ENCODE measurements at regions of chr12 and their contacts with region 1.

Region 1: GRCh38 chr12:92784795-92785562 is 82.2 kb downstream of the PLEKHG7 start:
- DNase-seq: peak in 22 of 35 experiments; percentile 1 to 78 (median 14)
- ATAC-seq: peak; percentile 96 to 99 (median 98)
- H3K4me3 ChIP-seq: no peak overlapping the region
- H3K4me3 Mint-ChIP-seq: no peak overlapping the region
- H3K27ac ChIP-seq: no peak overlapping the region
- H3K27ac Mint-ChIP-seq: no peak overlapping the region
- H3K4me1 ChIP-seq: peaks cover 0 to 3% of the 10 kb centered on the region in 2 experiments
- H3K4me1 Mint-ChIP-seq: peaks cover 12 to 16% (median 14%) of the 10 kb centered on the region in 3 donors
- H3K27me3 ChIP-seq: no peaks in the 10 kb centered on the region
- H3K27me3 Mint-ChIP-seq: no peaks in the 10 kb centered on the region

Region 2: GRCh38 chr12:92158796-92159439 is 626.1 kb before region 1 on chr12:
- CTCF ChIA-PET with region 1: no interaction called
- POLR2A ChIA-PET with region 1: interaction called in 1 of 2 experiments, 10 read pairs
- DNase-seq: peak in 1 of 35 experiments; percentile 31
- ATAC-seq: peak; percentile 69 to 85 (median 80)
- H3K4me3 ChIP-seq: peak overlapping the region in 1 of 2 donors; percentile 1
- H3K4me3 Mint-ChIP-seq: peak overlapping the region; percentile 35 to 75 (median 54)
- H3K27ac ChIP-seq: peak overlapping the region; percentile 73
- H3K27ac Mint-ChIP-seq: peak overlapping the region; percentile 87 to 91
- H3K4me1 ChIP-seq: peaks cover 17 to 24% of the 10 kb centered on the region in 2 experiments
- H3K4me1 Mint-ChIP-seq: peaks cover 64 to 84% (median 74%) of the 10 kb centered on the region in 3 donors
- H3K27me3 ChIP-seq: no peaks in the 10 kb centered on the region
- H3K27me3 Mint-ChIP-seq: no peaks in the 10 kb centered on the region

Region 3: DNA sequence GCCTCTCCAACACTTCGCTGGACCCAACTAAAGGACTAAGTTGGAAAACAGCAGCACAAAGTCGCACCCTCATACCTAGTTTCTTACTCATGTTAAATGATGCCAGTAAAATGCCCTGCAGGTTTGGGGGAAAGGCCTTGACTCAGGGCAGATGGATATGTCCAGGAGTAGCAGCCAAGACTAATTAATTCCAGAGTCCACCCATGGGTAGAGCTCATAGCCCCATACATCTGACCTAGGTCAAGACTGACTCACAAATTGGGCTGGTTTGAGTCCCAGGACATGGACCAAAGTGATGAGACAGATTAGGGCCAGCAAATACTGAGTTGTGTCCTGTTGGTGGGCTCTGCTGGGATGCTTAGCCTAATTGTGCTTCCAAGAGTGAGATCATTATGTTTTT is 415.3 kb before region 1 on chr12:
- CTCF ChIA-PET with region 1: no interaction called
- POLR2A ChIA-PET with region 1: no interaction called
- DNase-seq: no peak
- ATAC-seq: no peak
- H3K4me3 ChIP-seq: no peak overlapping the region
- H3K4me3 Mint-ChIP-seq: no peak overlapping the region
- H3K27ac ChIP-seq: no peak overlapping the region
- H3K27ac Mint-ChIP-seq: no peak overlapping the region
- H3K4me1 ChIP-seq: peaks cover 2 to 7% of the 10 kb centered on the region in 2 experiments
- H3K4me1 Mint-ChIP-seq: peaks cover 18 to 46% (median 37%) of the 10 kb centered on the region in 3 donors
- H3K27me3 ChIP-seq: no peaks in the 10 kb centered on the region
- H3K27me3 Mint-ChIP-seq: no peaks in the 10 kb centered on the region

Region 4: GRCh38 chr12:92871116-92871515 is 86.1 kb after region 1 on chr12:
- CTCF ChIA-PET with region 1: no interaction called
- POLR2A ChIA-PET with region 1: no interaction called
- DNase-seq: no peak
- ATAC-seq: no peak
- H3K4me3 ChIP-seq: no peak overlapping the region
- H3K4me3 Mint-ChIP-seq: no peak overlapping the region
- H3K27ac ChIP-seq: no peak overlapping the region
- H3K27ac Mint-ChIP-seq: no peak overlapping the region
- H3K4me1 ChIP-seq: peaks cover 0 to 2% of the 10 kb centered on the region in 2 experiments
- H3K4me1 Mint-ChIP-seq: peaks cover 13 to 27% (median 22%) of the 10 kb centered on the region in 3 donors
- H3K27me3 ChIP-seq: no peaks in the 10 kb centered on the region
- H3K27me3 Mint-ChIP-seq: no peaks in the 10 kb centered on the region

Region 5: GRCh38 chr12:93002293-93003054 is 217.5 kb after region 1 on chr12:
- CTCF ChIA-PET with region 1: interaction called in 1 of 2 experiments, 10 read pairs
- POLR2A ChIA-PET with region 1: no interaction called
- DNase-seq: no peak
- ATAC-seq: no peak
- H3K4me3 ChIP-seq: no peak overlapping the region
- H3K4me3 Mint-ChIP-seq: no peak overlapping the region
- H3K27ac ChIP-seq: no peak overlapping the region
- H3K27ac Mint-ChIP-seq: no peak overlapping the region
- H3K4me1 ChIP-seq: no peaks in the 10 kb centered on the region
- H3K4me1 Mint-ChIP-seq: no peaks in the 10 kb centered on the region
- H3K27me3 ChIP-seq: no peaks in the 10 kb centered on the region
- H3K27me3 Mint-ChIP-seq: no peaks in the 10 kb centered on the region

Measured in T-cell (primary cell).